ENCODE measurements at regions of chr1 and their contacts with region 1.

Region 1: DNA sequence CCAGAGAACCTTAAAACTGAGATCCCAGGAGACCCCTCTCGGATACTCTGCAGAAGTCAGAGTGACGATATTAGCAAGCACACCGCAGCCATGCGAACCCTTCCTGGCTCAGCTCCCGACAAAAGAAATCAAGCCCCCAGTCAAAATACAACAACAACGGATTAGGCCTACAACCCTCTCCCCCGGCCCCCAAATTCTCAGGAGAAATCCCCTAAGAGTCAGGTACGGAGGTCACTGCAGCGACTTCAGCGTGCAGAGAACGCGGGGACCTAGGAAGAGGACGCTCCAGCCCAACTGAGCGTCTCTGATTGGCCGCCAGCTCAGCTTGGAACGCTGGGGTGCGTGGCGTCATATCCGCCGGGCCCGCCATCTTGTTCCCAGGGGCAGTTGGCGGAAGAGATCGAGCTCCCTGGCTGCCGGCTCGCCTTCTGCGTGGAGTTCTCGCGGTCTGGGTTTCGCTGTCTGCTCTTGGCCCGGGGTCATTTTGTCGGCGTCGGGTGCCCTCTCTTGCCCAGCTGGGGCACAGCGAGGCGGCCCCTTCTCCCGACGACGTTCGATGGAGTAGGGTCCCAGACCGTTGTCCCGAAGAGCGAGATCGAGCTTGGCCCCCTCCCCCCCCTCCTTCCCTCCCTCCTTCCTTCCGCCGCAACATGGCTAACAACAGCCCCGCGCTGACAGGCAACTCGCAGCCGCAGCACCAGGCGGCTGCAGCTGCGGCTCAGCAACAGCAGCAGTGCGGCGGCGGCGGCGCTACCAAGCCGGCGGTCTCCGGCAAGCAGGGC is at the start of gene PRPF38B:
- DNase-seq: peak; percentile 89 to 90
- H3K4me3 ChIP-seq: peak within 1 kb of the TSS; percentile 93
- H3K27ac ChIP-seq: peak within 1 kb of the TSS; percentile 79
- H3K4me1 ChIP-seq: peaks cover 25% of the 10 kb centered on the region
- H3K27me3 ChIP-seq: no peaks in the 10 kb centered on the region
- CTCF ChIP-seq: no peak
- total RNA-seq, gene PRPF38B: 38.0 and 48.9 TPM in 2 replicates

Region 2: DNA sequence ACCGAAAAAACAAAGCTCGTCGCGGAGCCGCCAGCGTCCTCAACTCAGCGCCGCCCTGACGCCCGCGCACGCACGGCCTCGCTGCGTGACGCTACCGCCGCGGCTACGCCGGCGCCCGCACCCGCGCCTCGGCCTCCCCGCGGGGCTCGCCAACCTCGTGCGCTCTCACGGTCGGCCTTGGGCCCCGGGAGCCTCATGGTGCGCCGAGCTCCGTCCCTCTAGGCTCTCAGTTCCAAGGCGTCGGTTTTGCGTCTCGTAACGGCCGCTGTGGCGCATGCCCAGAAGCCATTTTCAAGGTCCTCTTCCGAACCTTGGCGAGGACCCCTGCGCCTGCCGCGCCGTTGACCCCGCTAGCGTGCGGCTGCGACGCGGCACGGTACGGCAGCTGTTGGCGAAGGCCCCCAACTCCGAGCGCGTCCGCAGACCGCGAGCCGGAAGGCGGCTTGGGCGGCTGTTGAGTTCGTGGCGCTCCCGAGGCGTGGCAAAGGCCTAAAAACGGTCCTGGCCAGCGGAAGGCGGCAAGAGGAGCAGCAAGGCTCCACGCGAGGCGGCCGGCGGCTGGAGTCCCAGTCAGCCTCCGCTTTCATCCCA is 31.0 kb before region 1 on chr1 and contains the start of gene HENMT1:
- CTCF ChIA-PET with region 1: no interaction called
- POLR2A ChIA-PET with region 1: interaction called, 10 read pairs
- intact Hi-C with region 1: no loop called
- DNase-seq: peak; percentile 58 to 59
- H3K4me3 ChIP-seq: peak within 1 kb of the TSS; percentile 83
- H3K27ac ChIP-seq: peak within 1 kb of the TSS; percentile 86
- H3K4me1 ChIP-seq: peaks cover 13% of the 10 kb centered on the region
- H3K27me3 ChIP-seq: no peaks in the 10 kb centered on the region
- CTCF ChIP-seq: no peak
- total RNA-seq, gene HENMT1: 17.9 and 21.5 TPM in 2 replicates

Region 3: DNA sequence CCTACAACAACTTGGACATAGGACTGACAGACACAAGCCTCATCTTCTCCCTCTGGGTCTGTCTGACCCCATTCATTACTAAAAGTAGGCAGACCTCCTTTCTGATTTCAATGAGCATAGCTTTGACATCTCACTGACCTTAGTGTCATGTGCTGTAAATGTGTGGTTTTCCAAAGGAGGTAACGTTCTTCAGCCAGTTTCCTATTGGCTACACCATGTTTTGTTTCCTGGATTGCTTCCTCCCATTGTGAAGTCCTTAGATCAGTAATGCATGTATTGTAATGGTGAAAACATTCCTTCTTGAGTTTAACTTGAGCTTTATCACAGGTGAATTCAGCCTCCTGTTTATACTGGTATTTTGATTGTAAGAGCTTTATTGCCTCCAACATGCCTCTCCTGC is 75.0 kb after region 1 on chr1:
- CTCF ChIA-PET with region 1: no interaction called
- POLR2A ChIA-PET with region 1: no interaction called
- intact Hi-C with region 1: no loop called
- DNase-seq: no peak
- H3K4me3 ChIP-seq: no peak overlapping the region
- H3K27ac ChIP-seq: no peak overlapping the region
- H3K4me1 ChIP-seq: no peaks in the 10 kb centered on the region
- H3K27me3 ChIP-seq: no peaks in the 10 kb centered on the region
- CTCF ChIP-seq: no peak

Region 4: DNA sequence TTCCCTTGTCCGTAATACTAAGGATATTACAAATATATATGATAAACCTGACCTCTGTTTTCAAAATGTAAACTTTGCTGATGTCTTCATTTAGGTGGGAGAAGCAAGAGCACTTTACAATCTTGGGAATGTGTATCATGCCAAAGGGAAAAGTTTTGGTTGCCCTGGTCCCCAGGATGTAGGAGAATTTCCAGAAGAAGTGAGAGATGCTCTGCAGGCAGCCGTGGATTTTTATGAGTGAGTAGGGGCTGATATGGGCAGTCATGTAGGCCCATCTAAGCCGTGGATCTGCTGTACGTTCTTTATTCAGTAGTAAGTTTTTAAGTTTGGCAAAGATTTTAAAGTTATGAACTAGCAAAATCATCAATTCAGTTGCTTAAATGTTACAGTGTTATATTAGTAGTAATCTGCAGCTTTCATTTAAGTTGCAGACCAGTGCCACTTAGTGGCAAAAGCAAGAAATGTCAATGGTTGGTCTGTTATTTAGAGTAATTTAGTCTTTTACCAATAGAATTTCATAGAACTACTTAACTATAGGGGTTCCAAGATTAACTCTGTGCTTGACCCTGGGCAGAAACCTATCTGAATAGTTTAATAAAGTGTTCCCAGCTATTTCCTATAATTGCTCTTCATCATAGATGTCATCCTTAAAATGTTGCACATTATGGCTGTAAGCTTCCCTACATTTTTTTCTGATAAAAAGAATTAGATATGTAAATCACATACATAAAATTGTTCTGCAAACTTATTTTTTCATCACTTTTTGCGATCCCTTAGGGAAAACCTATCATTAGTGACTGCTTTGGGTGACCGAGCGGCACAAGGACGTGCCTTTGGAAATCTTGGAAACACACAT is 206.0 kb after region 1 on chr1:
- CTCF ChIA-PET with region 1: no interaction called
- POLR2A ChIA-PET with region 1: interaction called, 8 read pairs
- intact Hi-C with region 1: loop called (anchors 10 kb)
- DNase-seq: peak in 1 of 2 experiments; percentile 77
- H3K4me3 ChIP-seq: no peak overlapping the region
- H3K27ac ChIP-seq: no peak overlapping the region
- H3K4me1 ChIP-seq: no peaks in the 10 kb centered on the region
- H3K27me3 ChIP-seq: no peaks in the 10 kb centered on the region
- CTCF ChIP-seq: peak; percentile 96